ENCODE measurements at regions of chr11 and their contacts with region 1.

Region 1: GRCh38 chr11:65988791-65989592 is 13.0 kb downstream of the EIF1AD start:
- DNase-seq: peak; percentile 89
- H3K4me3 Mint-ChIP-seq: no peak overlapping the region
- H3K27ac Mint-ChIP-seq: peak overlapping the region; percentile 85
- H3K4me1 Mint-ChIP-seq: peaks cover 5% of the 10 kb centered on the region
- H3K27me3 Mint-ChIP-seq: no peaks in the 10 kb centered on the region

Region 2: GRCh38 chr11:65779851-65780577 is 209.0 kb before region 1 on chr11:
- intact Hi-C with region 1: loop called (anchors 1 kb)
- DNase-seq: peak; percentile 83
- H3K4me3 Mint-ChIP-seq: peak overlapping the region; percentile 89
- H3K27ac Mint-ChIP-seq: peak overlapping the region; percentile 91
- H3K4me1 Mint-ChIP-seq: peaks cover 25% of the 10 kb centered on the region
- H3K27me3 Mint-ChIP-seq: peaks cover 8% of the 10 kb centered on the region

Region 3: DNA sequence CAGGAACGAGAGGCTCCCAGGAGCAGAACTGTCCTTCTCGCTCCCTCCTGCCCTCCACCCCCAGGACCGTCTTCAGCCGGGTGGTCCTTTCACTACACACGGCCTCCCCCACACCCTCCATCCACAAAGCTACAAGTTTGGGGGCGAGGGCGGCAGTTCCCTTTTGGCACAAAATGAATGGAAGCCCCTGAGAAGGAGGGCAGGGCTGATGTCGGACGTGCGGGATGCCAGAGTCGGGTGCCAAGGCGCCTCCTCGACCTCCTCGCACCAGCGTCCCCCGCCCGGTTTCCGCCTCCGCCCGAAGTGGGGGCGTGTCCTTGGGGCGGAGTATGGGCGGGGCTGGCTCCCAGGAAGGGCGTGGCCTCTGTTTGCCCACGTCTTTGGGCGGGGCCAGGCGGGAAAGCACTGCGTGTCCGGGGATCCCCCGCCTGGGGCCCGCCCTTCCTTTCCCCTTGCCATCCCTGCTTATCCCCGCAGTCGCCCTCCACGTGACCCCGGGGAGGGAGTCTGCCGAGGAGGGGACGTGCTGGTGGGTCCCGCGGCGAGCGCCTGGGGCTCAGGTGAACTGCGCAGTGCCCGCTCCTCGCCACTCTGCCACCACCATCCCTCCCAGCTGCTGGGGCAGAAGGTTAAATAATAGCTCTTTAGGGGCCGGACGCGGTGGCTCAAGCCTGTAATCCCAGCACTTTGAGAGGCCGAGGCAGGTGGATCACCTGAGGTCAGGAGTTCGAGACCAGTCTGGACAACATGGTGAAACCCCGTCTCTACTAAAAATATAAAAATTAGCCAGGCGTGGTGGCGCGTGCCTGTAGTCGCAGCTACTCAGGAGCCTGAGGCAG is 115.5 kb before region 1 on chr11:
- intact Hi-C with region 1: no loop called
- DNase-seq: peak; percentile 95
- H3K4me3 Mint-ChIP-seq: peak overlapping the region; percentile 91
- H3K27ac Mint-ChIP-seq: peak overlapping the region; percentile 79
- H3K4me1 Mint-ChIP-seq: peaks cover 13% of the 10 kb centered on the region
- H3K27me3 Mint-ChIP-seq: no peaks in the 10 kb centered on the region

Region 4: DNA sequence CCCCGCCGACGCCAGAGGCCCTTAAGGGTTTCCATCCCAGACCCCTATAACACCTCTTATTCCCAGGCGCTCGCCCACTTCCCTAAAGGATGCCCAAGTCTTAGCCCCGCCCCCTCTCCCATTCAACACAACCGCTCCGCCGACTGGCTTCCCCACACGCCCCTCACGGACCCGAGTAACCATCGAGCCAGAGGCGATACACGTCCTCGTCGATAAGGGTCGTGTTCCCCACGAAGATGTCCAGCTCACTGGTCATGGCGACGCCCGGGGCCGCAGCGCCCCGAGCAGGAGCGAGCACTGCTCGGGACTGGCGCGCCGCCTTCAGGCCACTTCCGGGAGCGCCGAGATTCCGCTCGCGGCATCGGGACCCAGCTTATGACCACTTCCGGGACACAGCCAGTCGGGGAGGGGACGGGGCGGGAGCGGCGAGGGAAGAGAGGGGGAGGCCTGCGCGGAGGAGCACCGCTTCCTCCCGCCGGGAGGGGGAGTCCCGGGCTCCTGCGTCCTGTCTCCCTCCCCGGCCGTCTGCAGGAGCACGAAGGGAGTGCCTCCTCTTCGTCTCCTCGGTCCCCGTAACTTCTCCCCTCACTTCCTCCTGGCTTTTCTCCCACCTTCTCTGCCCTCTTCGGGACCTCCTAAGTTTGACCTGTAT is 100.7 kb before region 1 on chr11 and contains the start of gene FIBP:
- intact Hi-C with region 1: loop called (anchors 1 kb)
- DNase-seq: peak; percentile 91
- H3K4me3 Mint-ChIP-seq: peak within 1 kb of the TSS; percentile 98
- H3K27ac Mint-ChIP-seq: peak within 1 kb of the TSS; percentile 92
- H3K4me1 Mint-ChIP-seq: peaks cover 47% of the 10 kb centered on the region
- H3K27me3 Mint-ChIP-seq: no peaks in the 10 kb centered on the region
- total RNA-seq, gene FIBP: 95.4 and 99.8 TPM in 2 replicates

Region 5: GRCh38 chr11:65900125-65900898 is 88.7 kb before region 1 on chr11 and contains the start of gene FOSL1:
- intact Hi-C with region 1: no loop called
- DNase-seq: peak; percentile 89
- H3K4me3 Mint-ChIP-seq: peak within 1 kb of the TSS; percentile 82
- H3K27ac Mint-ChIP-seq: peak within 1 kb of the TSS; percentile 74
- H3K4me1 Mint-ChIP-seq: peaks cover 33% of the 10 kb centered on the region
- H3K27me3 Mint-ChIP-seq: no peaks in the 10 kb centered on the region
- total RNA-seq, gene FOSL1: 24.0 and 25.9 TPM in 2 replicates

Region 6: GRCh38 chr11:66001942-66002647 is 13.1 kb after region 1 on chr11 and contains the starts of genes BANF1 and EIF1AD:
- intact Hi-C with region 1: loop called (anchors 1 kb)
- DNase-seq: peak; percentile 96
- H3K4me3 Mint-ChIP-seq: peak within 1 kb of the TSS; percentile 98
- H3K27ac Mint-ChIP-seq: peak within 1 kb of the TSS; percentile 99
- H3K4me1 Mint-ChIP-seq: peaks cover 20% of the 10 kb centered on the region
- H3K27me3 Mint-ChIP-seq: no peaks in the 10 kb centered on the region
- total RNA-seq, gene BANF1: 272 and 281 TPM in 2 replicates
- total RNA-seq, gene EIF1AD: 64.5 and 65.2 TPM in 2 replicates